Right ventricle myocardium inferior (tissue), 1 donor: ENCODE measurements at regions of chr6 and their contacts with region 1.

Region 1: GRCh38 chr6:1396952-1397868 is 7.8 kb downstream of the FOXF2 start:
- DNase-seq: peak; percentile 84
- ATAC-seq: peak; percentile 53

Region 2: GRCh38 chr6:797479-798077 is 599.6 kb before region 1 on chr6:
- intact Hi-C with region 1: loop called (anchors 5 kb)
- DNase-seq: no peak
- ATAC-seq: no peak